PC-9 (cell line): ENCODE measurements at regions of chr3 and their contacts with region 1.

Region 1: GRCh38 chr3:126475413-126476114 is at the start of gene ZXDC:
- DNase-seq: peak; percentile 77 to 97
- H3K4me3 ChIP-seq: peak within 1 kb of the TSS; percentile 96
- H3K27ac ChIP-seq: peak within 1 kb of the TSS; percentile 75
- H3K4me1 ChIP-seq: peaks cover 26% of the 10 kb centered on the region
- H3K27me3 ChIP-seq: no peaks in the 10 kb centered on the region
- CTCF ChIP-seq: no peak
- total RNA-seq, gene ZXDC: 52.9 and 55.4 TPM in 2 replicates

Region 2: GRCh38 chr3:126134219-126134975 is 341.2 kb before region 1 on chr3:
- CTCF ChIA-PET with region 1: no interaction called
- POLR2A ChIA-PET with region 1: interaction called, 3 read pairs
- intact Hi-C with region 1: loop called (anchors 1 kb)
- DNase-seq: peak in 1 of 2 experiments; percentile 56
- H3K4me3 ChIP-seq: no peak overlapping the region
- H3K27ac ChIP-seq: no peak overlapping the region
- H3K4me1 ChIP-seq: peaks cover 15% of the 10 kb centered on the region
- H3K27me3 ChIP-seq: no peaks in the 10 kb centered on the region
- CTCF ChIP-seq: peak; percentile 85

Region 3: DNA sequence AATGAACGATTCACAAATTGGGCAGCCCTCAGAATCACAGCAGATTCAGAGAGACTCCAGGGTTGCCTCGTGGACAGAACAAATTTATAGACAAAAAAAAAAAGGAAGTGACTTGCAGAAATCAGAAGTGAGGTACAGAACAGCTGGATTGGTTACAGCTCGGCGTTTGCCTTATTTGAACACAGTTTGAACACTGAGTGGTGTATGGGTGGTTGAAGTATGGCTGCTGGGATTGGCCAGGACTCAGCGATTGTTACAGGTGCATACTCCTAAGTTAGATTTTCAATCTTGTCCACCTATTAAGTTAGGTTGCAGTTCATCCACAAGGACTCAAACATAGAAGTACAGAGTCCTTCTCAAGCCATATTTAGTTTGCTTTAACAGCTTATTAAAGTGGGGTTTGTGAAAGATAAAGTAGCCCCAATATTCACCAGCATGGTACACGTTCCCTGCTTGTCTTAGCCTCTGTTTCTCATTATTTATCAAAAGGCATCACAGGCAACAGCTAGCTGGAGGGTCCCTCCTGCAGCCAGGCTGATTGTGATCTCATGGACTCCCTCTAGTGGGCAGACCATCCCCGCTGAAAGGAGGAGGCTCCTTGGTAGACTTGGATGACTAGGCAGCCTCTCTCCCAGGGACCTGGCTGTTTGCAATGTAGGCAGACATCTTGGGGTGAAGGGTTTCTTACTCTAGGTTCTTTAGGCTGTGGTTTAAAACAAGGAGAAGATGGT is 277.5 kb before region 1 on chr3:
- CTCF ChIA-PET with region 1: interaction called, 3 read pairs
- POLR2A ChIA-PET with region 1: interaction called, 5 read pairs
- intact Hi-C with region 1: loop called (anchors 5 kb)
- DNase-seq: peak; percentile 87 to 90
- H3K4me3 ChIP-seq: peak overlapping the region; percentile 59
- H3K27ac ChIP-seq: peak overlapping the region; percentile 83
- H3K4me1 ChIP-seq: 0 out of 2 replicates have a peak, but pooled peaks cover 5% of the 10 kb centered on the region
- H3K27me3 ChIP-seq: no peaks in the 10 kb centered on the region
- CTCF ChIP-seq: peak; percentile 81

Region 4: DNA sequence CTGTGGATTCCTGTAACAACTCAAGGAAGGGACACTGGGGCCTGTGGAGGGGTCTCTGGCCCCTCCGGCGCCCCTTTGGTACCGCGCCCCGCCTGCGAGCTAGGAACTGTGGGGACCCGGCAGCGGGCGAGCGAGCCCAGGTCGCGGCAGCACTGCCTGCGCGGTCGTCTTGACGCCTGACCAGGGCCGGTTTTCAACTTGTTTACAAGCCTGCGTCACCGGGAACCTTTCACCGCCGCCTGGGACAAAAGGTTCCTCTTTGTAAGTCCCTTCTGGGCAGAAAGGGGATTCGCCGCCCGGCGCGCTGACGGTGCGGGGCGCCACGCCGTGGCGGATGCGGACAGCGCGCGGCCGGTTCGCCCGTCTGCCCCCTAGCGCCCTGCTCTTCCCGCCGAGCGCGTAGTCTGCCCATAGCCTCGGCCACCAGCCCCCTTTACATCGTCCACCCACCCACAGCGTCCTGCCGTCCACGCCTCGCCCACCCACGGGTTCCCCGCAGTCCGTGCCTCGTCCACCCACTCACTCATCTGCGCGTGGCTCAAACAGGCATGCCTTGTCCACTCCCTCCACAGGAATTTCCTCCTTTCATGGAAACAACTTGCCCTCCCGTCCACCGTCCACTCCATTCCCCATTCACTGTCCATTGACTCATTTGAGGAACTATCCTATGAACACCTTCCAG is 86.3 kb before region 1 on chr3:
- CTCF ChIA-PET with region 1: interaction called, 4 read pairs
- POLR2A ChIA-PET with region 1: interaction called, 3 read pairs
- intact Hi-C with region 1: loop called (anchors 2 kb)
- DNase-seq: peak; percentile 85 to 89
- H3K4me3 ChIP-seq: peak overlapping the region; percentile 60; the same call in 1 of the 2 replicates
- H3K27ac ChIP-seq: no peak overlapping the region
- H3K4me1 ChIP-seq: 0 out of 2 replicates have a peak, but pooled peaks cover 11% of the 10 kb centered on the region
- H3K27me3 ChIP-seq: no peaks in the 10 kb centered on the region
- CTCF ChIP-seq: peak; percentile 77

Region 5: DNA sequence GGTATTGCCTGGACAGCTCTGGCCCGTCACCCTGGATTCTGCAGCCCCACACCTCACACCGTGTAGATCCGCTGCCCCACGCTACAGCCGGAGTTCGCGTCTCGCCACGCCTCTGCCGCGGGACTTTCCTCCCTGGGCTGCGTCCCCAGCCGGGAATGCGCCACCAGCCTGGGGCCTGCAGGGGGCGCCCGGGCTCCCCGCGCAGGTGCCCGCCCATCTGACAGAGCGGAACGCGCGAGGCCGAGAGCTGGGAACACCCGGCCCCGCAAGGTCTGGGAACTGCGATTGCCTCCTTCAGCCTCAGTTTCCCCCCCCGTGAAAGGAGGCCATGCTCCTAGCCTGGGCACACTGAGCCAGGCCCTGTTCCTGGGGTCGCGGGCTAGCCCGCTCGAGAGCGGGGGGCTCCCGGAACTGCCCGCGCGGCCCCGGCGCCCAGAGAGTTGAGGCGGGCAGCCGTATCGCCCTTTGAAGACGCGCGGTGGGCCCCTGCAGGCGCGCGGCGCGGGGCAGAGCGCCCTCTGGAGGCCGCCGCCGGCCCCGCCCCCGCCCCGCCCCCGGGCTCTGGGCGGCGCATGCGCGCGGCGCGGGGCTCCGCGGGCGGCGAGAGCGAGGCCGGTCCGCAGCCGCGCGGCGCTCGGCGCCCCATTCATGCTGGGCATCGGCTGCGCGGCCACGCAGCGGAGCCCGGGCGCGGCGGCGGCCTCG is 507.1 kb after region 1 on chr3 and contains the start of gene PLXNA1:
- CTCF ChIA-PET with region 1: no interaction called
- POLR2A ChIA-PET with region 1: no interaction called
- intact Hi-C with region 1: loop called (anchors 5 kb)
- DNase-seq: peak in 1 of 2 experiments; percentile 82
- H3K4me3 ChIP-seq: peak within 1 kb of the TSS; percentile 86
- H3K27ac ChIP-seq: no peak within 1 kb of the TSS
- H3K4me1 ChIP-seq: peaks cover 20% of the 10 kb centered on the region
- H3K27me3 ChIP-seq: no peaks in the 10 kb centered on the region
- CTCF ChIP-seq: peak; percentile 93
- total RNA-seq, gene PLXNA1: 83.1 and 88.2 TPM in 2 replicates

Region 6: GRCh38 chr3:127525373-127525772 is 1049.8 kb after region 1 on chr3:
- CTCF ChIA-PET with region 1: no interaction called
- POLR2A ChIA-PET with region 1: interaction called, 15 read pairs
- intact Hi-C with region 1: no loop called
- DNase-seq: peak; percentile 65 to 77
- H3K4me3 ChIP-seq: no peak overlapping the region
- H3K27ac ChIP-seq: no peak overlapping the region
- H3K4me1 ChIP-seq: no peaks in the 10 kb centered on the region
- H3K27me3 ChIP-seq: peaks cover 28% of the 10 kb centered on the region
- CTCF ChIP-seq: no peak

Region 7: GRCh38 chr3:127544192-127544802 is 1068.7 kb after region 1 on chr3:
- CTCF ChIA-PET with region 1: interaction called, 12 read pairs
- POLR2A ChIA-PET with region 1: no interaction called
- intact Hi-C with region 1: loop called (anchors 10 kb)
- DNase-seq: peak; percentile 45 to 80
- H3K4me3 ChIP-seq: no peak overlapping the region
- H3K27ac ChIP-seq: no peak overlapping the region
- H3K4me1 ChIP-seq: peaks cover 4% of the 10 kb centered on the region
- H3K27me3 ChIP-seq: peaks cover 25% of the 10 kb centered on the region
- CTCF ChIP-seq: peak; percentile 85